ENCODE measurements at regions of chrX and their contacts with region 1.

Region 1: DNA sequence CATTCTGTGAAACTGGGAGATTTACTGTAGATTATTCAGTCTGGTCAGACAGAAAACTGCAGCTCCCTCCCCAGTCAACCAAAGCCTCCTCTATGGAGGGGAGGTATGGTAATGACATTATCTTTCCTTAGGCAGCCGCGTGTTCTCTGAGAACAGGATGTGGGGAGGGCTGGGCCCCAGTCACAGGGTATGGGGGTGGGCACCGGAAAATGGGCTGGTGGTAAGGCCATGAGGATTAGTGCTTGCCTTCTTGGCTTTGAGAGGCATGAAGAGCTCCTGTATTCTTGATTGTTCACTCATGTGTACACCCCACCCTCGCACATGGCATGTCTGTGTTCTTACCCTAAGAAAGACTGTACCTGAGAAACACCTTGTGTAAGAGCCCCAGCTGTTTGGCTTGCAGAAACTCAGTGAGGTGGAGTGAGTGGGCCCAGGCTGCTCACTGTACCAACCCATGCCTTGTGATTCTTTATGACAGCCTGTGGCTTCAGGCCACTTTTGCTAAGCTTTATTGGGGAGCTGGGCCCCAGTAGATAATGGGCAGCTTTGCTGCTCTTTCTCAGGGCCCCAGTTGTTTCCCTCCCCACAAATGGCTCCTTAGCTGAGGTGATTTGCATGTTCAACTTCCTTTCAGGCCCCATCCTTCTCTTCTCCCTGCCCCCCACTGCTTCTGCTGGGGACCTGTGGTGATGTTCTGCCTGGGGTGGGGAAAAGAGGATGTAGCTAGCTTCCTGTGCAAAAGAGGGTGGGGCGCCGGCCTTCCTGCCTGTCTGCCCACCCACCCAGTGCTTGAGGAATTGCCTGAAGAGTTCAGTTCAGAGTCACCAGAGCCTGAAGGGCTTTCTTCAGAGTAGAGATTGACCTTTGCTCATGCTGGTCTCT is 30.7 kb downstream of the MSN start:
- DNase-seq: peak; percentile 36 to 82 (median 60)
- ATAC-seq: peak; percentile 85
- H3K4me3 ChIP-seq: no peak overlapping the region
- H3K27ac ChIP-seq: peak overlapping the region; percentile 81
- H3K4me1 ChIP-seq: peaks cover 26 to 40% of the 10 kb centered on the region in 2 experiments
- H3K27me3 ChIP-seq: no peaks in the 10 kb centered on the region
- CTCF ChIP-seq: no peak
- EP300 ChIP-seq: peak; percentile 67; the same call in 1 of the 2 replicates
- POLR2A ChIP-seq: no peak
- RAD21 ChIP-seq: no peak

Region 2: GRCh38 chrX:65476564-65476963 is 221.6 kb before region 1 on chrX:
- CTCF ChIA-PET with region 1: no interaction called
- POLR2A ChIA-PET with region 1: no interaction called
- in situ Hi-C with region 1: no loop called
- intact Hi-C with region 1: no loop called
- DNase-seq: no peak
- ATAC-seq: no peak
- H3K4me3 ChIP-seq: no peak overlapping the region
- H3K27ac ChIP-seq: no peak overlapping the region
- H3K4me1 ChIP-seq: no peaks in the 10 kb centered on the region
- H3K27me3 ChIP-seq: no peaks in the 10 kb centered on the region
- CTCF ChIP-seq: no peak
- EP300 ChIP-seq: no peak
- POLR2A ChIP-seq: no peak
- RAD21 ChIP-seq: no peak

Region 3: DNA sequence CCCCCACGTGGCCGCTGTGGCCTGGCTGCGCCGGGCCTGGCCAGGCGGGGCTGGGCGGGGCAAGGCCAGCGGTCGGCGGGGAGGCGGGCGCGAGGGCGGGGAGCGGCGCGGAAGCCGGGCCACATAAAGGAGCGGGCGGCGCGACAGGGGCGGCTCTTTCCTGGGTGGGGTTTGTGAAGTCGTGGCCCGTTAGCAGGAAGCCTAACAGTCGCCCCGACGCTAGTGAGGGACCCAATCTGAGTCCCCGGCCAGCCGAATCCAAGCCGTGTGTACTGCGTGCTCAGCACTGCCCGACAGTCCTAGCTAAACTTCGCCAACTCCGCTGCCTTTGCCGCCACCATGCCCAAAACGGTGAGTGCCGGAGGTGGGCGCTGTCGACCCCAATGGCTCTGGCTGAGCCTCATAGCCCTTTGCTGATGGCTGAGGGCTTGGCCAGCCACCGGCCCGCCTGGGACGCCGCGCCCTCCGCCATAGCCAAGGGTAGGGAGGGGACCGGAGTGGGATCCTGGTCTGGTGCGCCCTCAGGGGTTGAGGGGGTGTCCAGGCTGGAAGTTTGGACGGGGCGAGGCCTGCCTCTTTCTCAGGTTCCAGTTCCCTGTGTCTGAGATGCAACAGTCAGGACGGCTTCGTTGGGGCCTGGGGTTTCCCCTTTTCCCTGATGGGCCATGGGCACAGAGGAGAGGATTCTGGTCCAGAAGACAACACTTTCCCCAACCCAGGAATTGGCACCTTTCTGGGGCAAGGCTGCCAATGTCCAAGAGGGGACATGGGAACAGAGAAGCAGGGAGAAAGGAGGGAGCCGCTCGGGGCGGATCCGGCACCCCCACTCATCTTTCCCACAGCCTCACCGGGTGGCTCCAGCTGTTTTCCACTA is 30.4 kb before region 1 on chrX and contains the start of gene MSN:
- CTCF ChIA-PET with region 1: no interaction called
- POLR2A ChIA-PET with region 1: interaction called, 5 read pairs
- in situ Hi-C with region 1: no loop called
- intact Hi-C with region 1: loop called (anchors 1 kb)
- DNase-seq: peak; percentile 78 to 84 (median 84)
- ATAC-seq: peak; percentile 92
- H3K4me3 ChIP-seq: peak within 1 kb of the TSS; percentile 90
- H3K27ac ChIP-seq: peak within 1 kb of the TSS; percentile 100
- H3K4me1 ChIP-seq: peaks cover 10 to 26% of the 10 kb centered on the region in 2 experiments; a peak in 4 of 5 replicates
- H3K27me3 ChIP-seq: no peaks in the 10 kb centered on the region
- CTCF ChIP-seq: 0 out of 6 replicates have a peak, but pooled peaks of 1 of the 3 experiments have one; percentile 5
- EP300 ChIP-seq: no peak
- POLR2A ChIP-seq: peak; percentile 82
- RAD21 ChIP-seq: peak; percentile 14 to 28; a peak in 1 of 4 replicates
- polyA plus RNA-seq, gene MSN: 128 to 283 TPM

Region 4: GRCh38 chrX:66004928-66005829 is 307.0 kb after region 1 on chrX:
- CTCF ChIA-PET with region 1: no interaction called
- POLR2A ChIA-PET with region 1: no interaction called
- in situ Hi-C with region 1: no loop called
- intact Hi-C with region 1: loop called (anchors 5 kb)
- DNase-seq: peak in 2 of 4 experiments; percentile 41 to 75
- ATAC-seq: peak; percentile 51
- H3K4me3 ChIP-seq: no peak overlapping the region
- H3K27ac ChIP-seq: peak overlapping the region; percentile 90
- H3K4me1 ChIP-seq: peaks cover 6 to 74% of the 10 kb centered on the region in 2 experiments; a peak in 3 of 5 replicates
- H3K27me3 ChIP-seq: no peaks in the 10 kb centered on the region
- CTCF ChIP-seq: no peak
- EP300 ChIP-seq: peak; percentile 84
- POLR2A ChIP-seq: peak; percentile 53; the same call in 1 of the 2 replicates
- RAD21 ChIP-seq: 0 out of 4 replicates have a peak, but pooled peaks of 1 of the 2 experiments have one; percentile 4